ENCODE measurements at regions of chr11 and their contacts with region 1.

Region 1: DNA sequence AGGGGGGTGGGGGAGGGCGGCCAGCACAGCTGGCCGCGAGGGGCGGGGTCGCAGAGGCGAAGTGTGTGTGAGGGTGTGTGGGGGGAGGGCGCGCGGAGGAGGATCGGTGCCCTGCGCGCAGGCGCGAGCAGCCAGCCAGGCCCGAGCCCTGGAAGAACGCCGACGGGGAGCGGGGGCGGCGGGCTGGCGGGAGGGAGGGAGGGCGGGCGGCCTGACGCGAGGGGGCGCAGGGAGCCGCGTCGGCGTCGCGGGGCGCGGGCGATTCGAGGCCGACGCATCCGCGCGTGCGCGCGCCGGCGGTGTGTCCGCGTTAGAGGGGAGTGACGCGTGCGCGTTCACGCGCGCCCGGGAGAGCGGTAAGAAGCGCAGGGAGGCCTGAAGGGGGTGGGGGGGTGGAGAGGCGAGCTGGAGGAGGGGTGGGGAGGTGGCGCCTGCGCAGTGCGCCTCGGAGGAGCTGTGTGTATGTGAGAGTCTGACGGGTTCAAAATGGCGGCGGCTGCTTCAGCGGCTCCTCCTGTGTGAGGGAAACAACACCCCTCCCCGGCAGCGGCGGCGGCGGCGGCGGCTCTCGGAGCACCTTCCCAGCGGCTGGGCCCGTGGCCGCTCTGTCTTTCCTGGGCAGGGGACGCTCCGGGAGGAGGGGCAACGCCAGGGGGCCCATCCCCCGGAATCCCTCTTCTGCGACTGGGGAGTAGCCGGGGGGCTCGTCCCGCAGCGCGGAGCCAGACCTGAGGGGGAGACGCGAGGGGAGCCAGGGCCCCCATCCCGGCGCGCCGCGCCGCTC is at the start of gene KDM2A:
- DNase-seq: peak; percentile 95
- ATAC-seq: peak; percentile 81
- H3K4me3 ChIP-seq: peak within 1 kb of the TSS; percentile 93
- H3K27ac ChIP-seq: peak within 1 kb of the TSS; percentile 94
- H3K4me1 ChIP-seq: peaks cover 26% of the 10 kb centered on the region
- H3K27me3 ChIP-seq: no peaks in the 10 kb centered on the region
- CTCF ChIP-seq: peak in 1 of 3 experiments; percentile 35; a peak in 1 of 6 replicates
- EP300 ChIP-seq: no peak
- POLR2A ChIP-seq: peak; percentile 58
- RAD21 ChIP-seq: no peak
- polyA plus RNA-seq, gene KDM2A: 10.5 to 13.0 TPM

Region 2: DNA sequence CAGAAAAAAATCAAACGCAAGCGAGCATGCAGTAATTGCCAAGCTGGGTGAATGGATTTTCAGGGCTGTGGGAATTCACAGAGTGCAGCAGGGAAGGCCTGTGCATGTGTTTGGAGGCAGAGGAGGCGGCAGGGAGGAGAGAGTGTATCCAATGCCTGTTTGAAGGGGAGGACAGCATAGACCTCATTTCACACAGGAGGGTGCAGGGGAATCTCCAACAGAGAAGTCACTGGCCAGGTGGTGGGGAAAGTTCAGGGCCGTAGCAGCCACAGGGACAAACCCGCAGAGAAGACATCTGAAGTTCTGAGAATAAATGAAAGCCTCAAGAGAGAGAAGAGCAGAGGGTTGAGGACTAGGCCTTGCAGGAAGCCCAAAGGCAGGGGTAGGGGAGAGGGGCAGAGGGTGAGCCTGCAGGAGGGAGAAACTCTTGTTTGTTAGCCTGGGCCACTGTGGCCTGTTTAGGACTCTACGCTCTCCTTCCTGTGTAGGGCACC is 19.1 kb before region 1 on chr11:
- CTCF ChIA-PET with region 1: interaction called, 16 read pairs
- POLR2A ChIA-PET with region 1: interaction called, 3 read pairs
- RAD21 ChIA-PET with region 1: interaction called, 11 read pairs
- SMC1A ChIA-PET with region 1: interaction called, 28 read pairs
- in situ Hi-C with region 1: no loop called
- intact Hi-C with region 1: no loop called
- DNase-seq: peak; percentile 63
- ATAC-seq: peak; percentile 88
- H3K4me3 ChIP-seq: peak overlapping the region; percentile 6; the same call in 1 of the 2 replicates
- H3K27ac ChIP-seq: peak overlapping the region; percentile 90
- H3K4me1 ChIP-seq: peaks cover 24% of the 10 kb centered on the region
- H3K27me3 ChIP-seq: no peaks in the 10 kb centered on the region
- CTCF ChIP-seq: no peak
- EP300 ChIP-seq: no peak
- POLR2A ChIP-seq: no peak
- RAD21 ChIP-seq: no peak

Region 3: GRCh38 chr11:67105964-67106363 is 13.0 kb before region 1 on chr11:
- CTCF ChIA-PET with region 1: interaction called, 12 read pairs
- POLR2A ChIA-PET with region 1: interaction called, 5 read pairs
- RAD21 ChIA-PET with region 1: interaction called, 6 read pairs
- SMC1A ChIA-PET with region 1: interaction called, 28 read pairs
- in situ Hi-C with region 1: no loop called
- intact Hi-C with region 1: no loop called
- DNase-seq: no peak
- ATAC-seq: peak; percentile 73
- H3K4me3 ChIP-seq: no peak overlapping the region
- H3K27ac ChIP-seq: peak overlapping the region; percentile 46
- H3K4me1 ChIP-seq: peaks cover 17% of the 10 kb centered on the region
- H3K27me3 ChIP-seq: no peaks in the 10 kb centered on the region
- CTCF ChIP-seq: no peak
- EP300 ChIP-seq: no peak
- POLR2A ChIP-seq: no peak
- RAD21 ChIP-seq: no peak

Region 4: GRCh38 chr11:67160874-67161783 is 42.1 kb after region 1 on chr11:
- CTCF ChIA-PET with region 1: no interaction called
- POLR2A ChIA-PET with region 1: interaction called, 3 read pairs
- RAD21 ChIA-PET with region 1: interaction called, 5 read pairs
- SMC1A ChIA-PET with region 1: interaction called, 4 read pairs
- in situ Hi-C with region 1: no loop called
- intact Hi-C with region 1: loop called (anchors 5 kb)
- DNase-seq: no peak
- ATAC-seq: peak; percentile 34
- H3K4me3 ChIP-seq: no peak overlapping the region
- H3K27ac ChIP-seq: peak overlapping the region; percentile 45
- H3K4me1 ChIP-seq: peaks cover 23% of the 10 kb centered on the region
- H3K27me3 ChIP-seq: no peaks in the 10 kb centered on the region
- CTCF ChIP-seq: no peak
- EP300 ChIP-seq: no peak
- POLR2A ChIP-seq: no peak
- RAD21 ChIP-seq: no peak

Measured in GM12878 (cell line).